ENCODE measurements at regions of chr10 and their contacts with region 1.

Region 1: DNA sequence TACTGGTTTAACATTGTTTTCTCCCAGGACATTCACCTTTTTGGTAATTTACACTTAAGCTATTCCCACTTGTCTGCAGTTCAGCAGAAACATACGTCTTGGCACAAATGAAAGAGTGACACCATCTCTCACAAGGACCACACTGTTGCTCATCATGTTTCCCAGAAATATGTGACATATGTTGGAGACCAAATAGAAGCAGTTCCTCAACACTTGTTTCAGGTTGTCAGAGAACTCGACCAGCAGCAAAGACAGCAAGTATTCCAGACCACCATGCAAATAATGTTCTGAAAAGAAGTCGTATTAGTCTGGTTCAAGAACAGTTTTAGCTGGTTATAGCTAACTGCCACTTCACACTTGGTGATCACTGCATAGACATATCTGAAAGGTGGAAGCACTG is 81.3 kb upstream of the KLF6 start:
- DNase-seq: no peak
- ATAC-seq: no peak
- H3K4me3 ChIP-seq: no peak overlapping the region
- H3K27ac ChIP-seq: no peak overlapping the region
- H3K4me1 ChIP-seq: peaks cover under 1 to 4% of the 10 kb centered on the region in 2 experiments; a peak in 3 of 5 replicates
- H3K27me3 ChIP-seq: no peaks in the 10 kb centered on the region
- CTCF ChIP-seq: no peak
- EP300 ChIP-seq: no peak
- POLR2A ChIP-seq: no peak
- RAD21 ChIP-seq: no peak

Region 2: DNA sequence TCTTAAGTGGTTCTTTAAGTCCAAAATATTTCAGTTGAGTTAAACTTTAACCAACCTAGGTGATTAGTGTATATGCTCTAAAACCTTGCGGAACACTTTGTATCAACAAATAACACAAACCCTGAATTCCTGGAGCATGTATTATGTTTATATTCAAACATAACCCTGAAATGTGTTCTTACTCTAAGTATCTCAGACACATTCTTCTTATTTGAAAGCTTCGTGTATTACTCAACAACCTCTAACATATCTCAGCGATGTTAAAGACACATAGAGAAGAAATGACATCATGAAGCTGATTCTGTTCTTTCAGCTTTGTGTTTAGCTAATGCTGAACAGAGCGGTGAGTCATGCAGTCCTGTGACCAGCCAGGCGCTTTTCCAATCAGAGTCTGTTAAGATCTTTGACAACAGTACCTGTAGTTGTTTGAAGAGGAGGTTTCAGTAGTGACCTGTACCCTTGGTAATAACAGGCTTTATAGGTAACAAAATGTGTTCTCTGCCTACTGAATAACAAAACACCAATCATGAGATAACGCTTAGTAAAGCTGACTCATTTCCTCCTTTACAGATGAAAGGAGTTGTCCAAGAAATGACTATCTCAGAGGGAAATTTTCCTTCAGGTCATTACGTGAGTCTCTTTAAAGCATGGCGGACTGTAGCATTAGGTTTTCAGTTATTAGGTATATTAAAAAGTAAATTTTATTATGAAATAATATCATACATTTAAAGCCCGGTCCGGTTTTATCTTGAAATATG is 14.0 kb before region 1 on chr10:
- CTCF ChIA-PET with region 1: no interaction called
- POLR2A ChIA-PET with region 1: interaction called, 11 read pairs
- in situ Hi-C with region 1: no loop called
- intact Hi-C with region 1: no loop called
- DNase-seq: peak; percentile 60 to 85 (median 66)
- ATAC-seq: peak; percentile 92
- H3K4me3 ChIP-seq: no peak overlapping the region
- H3K27ac ChIP-seq: peak overlapping the region; percentile 81
- H3K4me1 ChIP-seq: peaks cover 11 to 30% of the 10 kb centered on the region in 2 experiments
- H3K27me3 ChIP-seq: no peaks in the 10 kb centered on the region
- CTCF ChIP-seq: no peak
- EP300 ChIP-seq: peak; percentile 84
- POLR2A ChIP-seq: 0 out of 2 replicates have a peak, but pooled peaks have one; percentile 33
- RAD21 ChIP-seq: no peak